ENCODE measurements at regions of chr20 and their contacts with region 1.

Region 1: DNA sequence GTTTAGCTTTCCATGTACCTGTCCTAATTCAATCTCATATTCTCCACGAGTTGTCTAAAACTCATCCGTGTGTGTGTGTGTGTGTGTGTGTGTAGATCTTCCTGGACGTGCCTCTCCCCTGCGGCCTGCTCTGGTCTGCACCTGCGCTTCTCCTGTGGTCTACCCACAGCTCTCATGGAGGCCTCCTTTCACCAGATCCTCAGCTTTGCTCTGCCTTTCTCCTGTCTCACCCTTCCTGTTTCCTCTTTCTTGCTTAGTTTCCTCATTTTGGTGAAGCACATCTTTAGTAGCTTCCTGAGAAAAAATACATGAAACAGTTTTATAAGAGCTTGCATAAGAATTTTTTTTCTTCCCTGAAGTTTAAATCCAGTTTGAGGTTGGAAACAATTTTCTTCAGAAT is 18.1 kb downstream of the SLX4IP start:
- DNase-seq: peak in 5 of 14 experiments; percentile 6 to 58 (median 54)
- ATAC-seq: peak; percentile 64
- H3K4me3 ChIP-seq: no peak overlapping the region
- H3K4me3 Mint-ChIP-seq: peak overlapping the region; percentile 4
- H3K27ac ChIP-seq: peak overlapping the region in 1 of 2 donors; percentile 55
- H3K27ac Mint-ChIP-seq: peak overlapping the region; percentile 54
- H3K4me1 ChIP-seq: peaks cover 9% of the 10 kb centered on the region
- H3K4me1 Mint-ChIP-seq: peaks cover 24% of the 10 kb centered on the region
- H3K27me3 ChIP-seq: no peaks in the 10 kb centered on the region
- H3K27me3 Mint-ChIP-seq: no peaks in the 10 kb centered on the region
- CTCF ChIP-seq: no peak

Region 2: GRCh38 chr20:10427060-10427692 is 26.1 kb before region 1 on chr20:
- CTCF ChIA-PET with region 1: interaction called, 3 read pairs
- POLR2A ChIA-PET with region 1: no interaction called
- intact Hi-C with region 1: loop called in 1 of 2 experiments (anchors 1 kb)
- DNase-seq: peak in 13 of 14 experiments; percentile 13 to 70 (median 35)
- ATAC-seq: no peak
- H3K4me3 ChIP-seq: no peak overlapping the region
- H3K4me3 Mint-ChIP-seq: no peak overlapping the region
- H3K27ac ChIP-seq: no peak overlapping the region
- H3K27ac Mint-ChIP-seq: no peak overlapping the region
- H3K4me1 ChIP-seq: no peaks in the 10 kb centered on the region
- H3K4me1 Mint-ChIP-seq: peaks cover 56% of the 10 kb centered on the region
- H3K27me3 ChIP-seq: no peaks in the 10 kb centered on the region
- H3K27me3 Mint-ChIP-seq: no peaks in the 10 kb centered on the region
- CTCF ChIP-seq: peak; percentile 88